ENCODE measurements at regions of chr1 and their contacts with region 1.

Region 1: GRCh38 chr1:147494998-147495580 is 46.2 kb upstream of the BCL9 start:
- DNase-seq: peak; percentile 82
- H3K4me3 Mint-ChIP-seq: no peak overlapping the region
- H3K27ac Mint-ChIP-seq: no peak overlapping the region
- H3K4me1 Mint-ChIP-seq: no peaks in the 10 kb centered on the region
- H3K27me3 Mint-ChIP-seq: no peaks in the 10 kb centered on the region

Region 2: GRCh38 chr1:147273409-147274336 is 221.4 kb before region 1 on chr1:
- CTCF ChIA-PET with region 1: no interaction called
- intact Hi-C with region 1: loop called (anchors 10 kb)
- DNase-seq: peak; percentile 42
- H3K4me3 Mint-ChIP-seq: no peak overlapping the region
- H3K27ac Mint-ChIP-seq: no peak overlapping the region
- H3K4me1 Mint-ChIP-seq: peaks cover 6% of the 10 kb centered on the region
- H3K27me3 Mint-ChIP-seq: no peaks in the 10 kb centered on the region

Region 3: DNA sequence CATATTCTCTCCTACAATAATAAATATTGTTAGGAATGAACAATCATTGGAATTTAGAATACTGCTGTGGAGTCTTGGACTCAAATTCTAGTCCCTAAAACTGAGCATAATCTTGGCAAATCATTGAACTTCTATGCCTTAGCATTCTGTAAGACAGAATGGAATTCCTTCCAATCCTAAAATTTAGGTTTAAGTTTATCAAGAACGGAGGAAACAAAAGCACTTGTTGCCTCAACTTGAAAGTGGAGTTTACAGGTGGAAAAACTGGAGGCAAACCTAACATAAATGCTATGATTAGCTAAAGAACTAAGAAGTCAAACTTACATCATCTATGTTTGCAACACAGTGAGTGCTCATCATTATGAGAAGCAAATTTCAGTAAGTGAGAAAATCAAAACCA is 101.9 kb after region 1 on chr1:
- CTCF ChIA-PET with region 1: no interaction called
- intact Hi-C with region 1: no loop called
- DNase-seq: no peak
- H3K4me3 Mint-ChIP-seq: no peak overlapping the region
- H3K27ac Mint-ChIP-seq: no peak overlapping the region
- H3K4me1 Mint-ChIP-seq: peaks cover 18% of the 10 kb centered on the region
- H3K27me3 Mint-ChIP-seq: no peaks in the 10 kb centered on the region

Region 4: GRCh38 chr1:147627435-147628110 is 132.5 kb after region 1 on chr1:
- CTCF ChIA-PET with region 1: interaction called, 4 read pairs
- intact Hi-C with region 1: loop called (anchors 1 kb)
- DNase-seq: peak; percentile 62
- H3K4me3 Mint-ChIP-seq: no peak overlapping the region
- H3K27ac Mint-ChIP-seq: no peak overlapping the region
- H3K4me1 Mint-ChIP-seq: peaks cover 25% of the 10 kb centered on the region
- H3K27me3 Mint-ChIP-seq: no peaks in the 10 kb centered on the region

Region 5: DNA sequence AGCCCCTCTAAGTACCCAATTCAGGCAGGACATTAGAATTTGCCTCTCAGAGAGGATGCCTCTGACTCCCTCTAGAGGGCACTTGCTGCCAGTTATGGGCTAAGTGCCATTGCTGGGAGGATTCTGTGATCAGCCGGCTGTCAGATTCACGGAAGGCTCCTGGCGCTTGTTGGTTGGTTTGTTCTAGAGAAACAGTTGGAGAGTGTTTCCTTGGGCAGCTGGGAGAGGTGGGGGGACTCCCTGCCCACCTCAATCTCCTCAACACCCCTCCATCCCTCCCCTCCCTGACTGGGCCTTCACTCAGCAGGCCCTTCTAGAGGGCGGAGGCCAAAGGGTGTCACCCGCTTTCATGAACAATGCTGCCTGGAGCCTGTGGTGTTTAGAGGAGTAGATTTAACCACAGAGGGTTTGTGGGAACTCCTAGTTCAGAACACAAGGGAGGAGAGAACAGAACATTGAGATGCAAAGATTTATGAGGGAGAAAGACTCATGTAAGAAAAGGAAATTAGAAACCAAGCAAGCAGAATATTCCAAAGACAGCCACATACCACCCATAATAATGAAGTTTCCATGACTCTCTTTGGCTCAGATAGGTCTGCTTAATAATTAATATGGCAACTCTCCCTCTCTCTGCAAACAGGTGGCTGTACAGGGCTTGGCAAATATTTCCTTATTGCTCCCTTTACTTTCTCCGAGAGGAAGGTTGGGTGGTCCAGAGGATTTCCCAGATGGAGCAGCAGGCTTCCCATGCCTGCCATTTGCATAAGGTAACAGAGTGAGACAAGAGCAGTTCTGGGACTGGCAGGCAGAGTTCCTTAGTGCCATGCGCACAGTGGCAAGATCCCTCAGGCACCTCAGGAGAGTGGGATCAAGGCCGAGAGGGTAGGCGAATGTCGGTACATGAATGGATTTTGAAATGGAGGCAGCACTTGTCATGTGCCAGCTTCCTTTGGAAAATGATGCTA is 205.2 kb after region 1 on chr1:
- CTCF ChIA-PET with region 1: interaction called, 4 read pairs
- intact Hi-C with region 1: loop called (anchors 1 kb)
- DNase-seq: peak; percentile 78
- H3K4me3 Mint-ChIP-seq: no peak overlapping the region
- H3K27ac Mint-ChIP-seq: no peak overlapping the region
- H3K4me1 Mint-ChIP-seq: peaks cover 6% of the 10 kb centered on the region
- H3K27me3 Mint-ChIP-seq: no peaks in the 10 kb centered on the region

Region 6: GRCh38 chr1:147924813-147925212 is 429.7 kb after region 1 on chr1:
- CTCF ChIA-PET with region 1: no interaction called
- intact Hi-C with region 1: no loop called
- DNase-seq: no peak
- H3K4me3 Mint-ChIP-seq: no peak overlapping the region
- H3K27ac Mint-ChIP-seq: no peak overlapping the region
- H3K4me1 Mint-ChIP-seq: peaks cover 9% of the 10 kb centered on the region
- H3K27me3 Mint-ChIP-seq: no peaks in the 10 kb centered on the region

Measured in activated naive CD4-positive, alpha-beta T cell treated with anti-CD3 and anti-CD28 coated beads for 36 hours (primary cell).